ENCODE measurements at regions of chr10 and their contacts with region 1.

Region 1: DNA sequence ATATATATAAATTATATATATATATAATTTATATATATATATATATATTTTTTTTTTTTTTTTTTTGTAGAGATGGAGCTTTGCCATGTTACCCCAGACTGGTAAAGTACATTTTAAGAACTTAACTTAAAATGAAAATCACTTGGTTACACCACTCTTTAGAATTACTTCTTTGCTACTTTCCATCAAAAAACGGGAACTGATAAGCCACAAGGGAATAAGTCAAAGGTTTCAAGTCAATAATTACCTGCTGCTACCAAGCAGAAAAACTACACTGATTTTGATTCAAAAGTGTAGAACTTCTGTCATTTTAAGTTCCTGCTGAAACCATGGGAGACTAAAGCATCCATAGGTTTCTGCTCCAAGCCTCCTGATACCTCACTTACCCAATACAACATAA is 12.2 kb downstream of the PPA1 start:
- DNase-seq: peak; percentile 13
- H3K4me3 ChIP-seq: no peak overlapping the region
- H3K27ac ChIP-seq: peak overlapping the region; percentile 5
- H3K4me1 ChIP-seq: peaks cover 23% of the 10 kb centered on the region
- CTCF ChIP-seq: no peak

Region 2: DNA sequence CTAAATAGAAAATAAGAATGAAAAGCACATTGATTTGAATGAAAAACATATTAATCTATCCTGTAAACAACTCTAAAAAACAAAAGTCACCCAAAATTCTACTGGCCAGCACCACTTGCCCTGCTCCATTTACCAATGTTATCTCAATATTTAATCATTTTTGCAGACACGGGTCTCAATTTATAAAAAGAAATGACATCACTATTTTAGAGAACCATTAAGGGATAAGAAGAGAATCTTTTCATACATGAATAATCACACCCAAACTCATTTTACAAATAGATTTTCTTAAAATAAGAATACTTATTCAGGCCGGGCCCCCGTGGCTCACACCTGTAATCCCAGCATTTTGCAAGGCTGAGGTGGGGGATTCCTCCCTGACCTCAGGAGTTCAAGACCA is 54.6 kb before region 1 on chr10:
- CTCF ChIA-PET with region 1: no interaction called
- POLR2A ChIA-PET with region 1: no interaction called
- intact Hi-C with region 1: no loop called
- DNase-seq: no peak
- H3K4me3 ChIP-seq: no peak overlapping the region
- H3K27ac ChIP-seq: no peak overlapping the region
- H3K4me1 ChIP-seq: peaks cover 45% of the 10 kb centered on the region
- CTCF ChIP-seq: no peak

Region 3: DNA sequence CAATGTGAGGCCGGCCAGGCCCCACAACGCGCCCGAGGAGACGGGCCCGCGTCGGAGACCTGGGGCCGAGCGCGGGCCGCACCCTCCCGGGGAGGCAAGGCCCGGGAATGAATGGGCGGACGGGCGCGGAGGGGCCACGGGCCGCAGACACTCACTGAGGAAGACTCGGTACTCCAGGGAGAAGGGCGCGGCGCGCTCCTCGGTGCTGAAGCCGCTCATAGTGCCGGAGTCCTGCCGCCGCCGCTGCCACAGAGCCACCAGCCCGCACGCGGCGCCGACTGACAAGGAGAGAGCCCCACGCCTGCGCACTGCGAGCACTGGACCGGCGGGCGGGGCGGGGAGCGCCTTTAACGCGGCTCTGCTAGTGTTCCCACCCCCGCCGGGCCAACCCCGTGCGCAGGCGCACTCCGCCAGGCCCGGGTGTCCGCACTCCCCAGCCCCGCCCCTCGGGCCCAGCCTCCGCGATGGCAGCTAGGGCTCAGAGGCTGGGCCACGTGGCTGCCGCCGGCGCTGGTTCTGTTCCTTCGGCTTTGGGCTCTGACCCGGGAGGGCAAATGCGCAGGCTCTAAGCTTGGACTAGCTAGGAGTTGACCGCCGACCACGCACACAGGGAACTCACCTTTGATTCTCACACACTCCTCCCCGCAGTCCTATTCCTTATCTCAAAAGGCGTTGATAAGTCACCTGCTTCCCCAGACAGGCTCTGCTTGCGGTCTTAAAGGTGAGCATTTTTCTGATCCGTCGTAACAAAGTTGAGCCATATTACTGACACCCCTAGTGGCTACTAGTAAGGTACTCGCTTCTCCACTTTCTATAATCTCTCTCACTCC is 12.3 kb after region 1 on chr10 and contains the start of gene PPA1:
- CTCF ChIA-PET with region 1: interaction called, 4 read pairs
- POLR2A ChIA-PET with region 1: interaction called, 12 read pairs
- intact Hi-C with region 1: no loop called
- DNase-seq: peak; percentile 99
- H3K4me3 ChIP-seq: peak within 1 kb of the TSS; percentile 82
- H3K27ac ChIP-seq: peak within 1 kb of the TSS; percentile 60
- H3K4me1 ChIP-seq: peaks cover 37% of the 10 kb centered on the region
- CTCF ChIP-seq: peak; percentile 69
- total RNA-seq, gene PPA1: 215 and 221 TPM in 2 replicates

Region 4: DNA sequence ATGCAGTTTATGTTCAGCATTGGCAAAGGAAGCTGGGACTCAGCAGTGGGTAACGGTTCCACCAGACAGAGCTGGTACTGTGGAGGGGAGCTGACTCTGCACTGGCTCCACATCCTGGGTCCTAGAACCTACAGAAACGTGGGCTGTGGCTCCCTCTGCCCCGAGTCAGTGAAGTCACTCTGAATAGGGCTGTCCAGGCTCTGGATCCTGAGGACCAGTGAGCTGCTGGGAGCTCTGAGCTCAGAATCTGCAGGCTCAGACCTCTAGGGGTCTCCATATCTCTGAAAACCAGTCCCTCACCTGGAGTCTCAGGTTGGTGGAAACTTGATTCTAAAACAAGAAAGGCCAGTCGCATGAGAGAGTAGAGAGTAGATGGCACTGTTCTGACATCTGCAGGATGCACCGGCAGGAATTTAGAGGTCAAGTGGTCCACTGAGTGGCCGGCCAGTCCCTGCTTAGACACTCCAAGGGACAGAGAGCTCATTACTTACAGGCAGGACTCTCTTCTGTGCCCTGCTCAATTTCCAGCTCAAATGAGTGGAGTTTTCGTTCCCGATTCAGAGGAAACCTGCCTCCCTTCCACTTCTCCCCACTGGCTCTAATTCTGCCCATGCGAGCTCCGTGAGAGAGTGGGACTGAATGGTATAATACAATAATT is 44.1 kb after region 1 on chr10:
- CTCF ChIA-PET with region 1: interaction called, 11 read pairs
- POLR2A ChIA-PET with region 1: interaction called, 3 read pairs
- intact Hi-C with region 1: loop called (anchors 2 kb)
- DNase-seq: peak; percentile 78
- H3K4me3 ChIP-seq: no peak overlapping the region
- H3K27ac ChIP-seq: no peak overlapping the region
- H3K4me1 ChIP-seq: peaks cover 7% of the 10 kb centered on the region
- CTCF ChIP-seq: peak; percentile 90

Region 5: DNA sequence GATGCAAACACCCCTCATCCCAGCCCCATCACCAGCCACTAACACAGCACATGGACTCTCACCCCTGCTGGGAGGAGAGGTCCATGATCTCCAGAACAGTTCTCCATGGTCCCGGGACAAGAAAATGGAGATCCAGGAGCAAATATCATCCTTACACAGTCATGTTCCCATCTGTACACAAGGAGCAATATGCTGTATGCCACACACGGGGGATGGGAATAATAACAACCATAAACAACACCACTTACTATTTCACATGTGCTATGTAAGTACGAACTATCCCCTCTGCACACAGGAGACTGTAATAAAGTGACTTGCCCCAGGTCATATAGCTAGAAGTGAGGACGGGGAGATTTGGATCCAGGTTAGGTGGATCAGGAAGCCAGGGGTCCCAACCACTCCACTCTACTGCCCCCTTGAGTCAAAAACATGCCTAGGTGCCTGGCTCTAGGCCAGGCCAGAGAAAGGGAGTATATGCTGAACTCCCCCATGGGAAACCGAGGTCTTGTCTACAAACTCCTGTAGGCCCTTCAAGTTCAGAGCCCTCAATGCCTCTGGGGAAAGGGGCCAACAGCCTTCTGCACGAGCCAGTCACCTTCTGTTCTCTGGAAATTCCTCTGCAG is 127.3 kb after region 1 on chr10:
- CTCF ChIA-PET with region 1: interaction called, 3 read pairs
- POLR2A ChIA-PET with region 1: no interaction called
- intact Hi-C with region 1: loop called (anchors 1 kb)
- DNase-seq: peak; percentile 77
- H3K4me3 ChIP-seq: no peak overlapping the region
- H3K27ac ChIP-seq: no peak overlapping the region
- H3K4me1 ChIP-seq: peaks cover 20% of the 10 kb centered on the region
- CTCF ChIP-seq: peak; percentile 97

Measured in OCI-LY7 (cell line).